ENCODE measurements at regions of chr1 and their contacts with region 1.

Region 1: DNA sequence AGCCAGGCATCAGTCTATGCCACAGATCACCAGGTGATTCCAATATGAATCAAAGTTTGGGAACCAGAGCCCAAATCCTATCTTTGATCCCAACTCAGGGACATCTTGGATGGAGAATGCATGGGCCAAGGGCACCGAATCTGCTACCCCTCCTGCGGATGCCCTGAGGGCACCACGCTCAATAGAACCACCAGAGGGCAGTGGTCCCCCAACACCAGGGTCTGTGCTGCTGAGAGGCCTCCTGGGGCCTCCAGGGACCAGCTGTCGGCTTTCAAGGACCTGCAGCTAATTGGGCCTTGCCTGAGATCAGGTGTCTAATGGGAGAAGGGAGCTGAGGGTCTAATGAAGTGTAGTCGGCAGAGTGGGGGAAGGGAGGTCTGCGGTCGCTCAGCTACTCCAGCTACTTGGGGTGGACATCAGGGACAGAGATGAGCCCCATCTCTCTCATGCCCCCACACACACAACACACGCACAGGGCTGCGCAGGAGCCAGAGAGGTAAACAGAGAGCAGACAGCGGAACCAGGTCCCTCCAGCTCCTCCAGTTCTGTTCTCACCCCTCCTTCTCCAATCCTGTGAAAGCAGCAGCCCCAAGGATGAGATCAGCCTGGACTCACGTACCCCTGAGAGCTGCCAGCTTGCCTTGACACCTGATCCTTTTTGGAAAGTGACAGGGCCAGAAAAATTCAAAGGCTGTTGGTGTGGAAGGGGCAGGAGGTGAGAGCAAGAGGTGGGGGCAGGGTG is 34.9 kb upstream of the PPP1R15B start:
- DNase-seq: no peak
- ATAC-seq: peak; percentile 68

Region 2: DNA sequence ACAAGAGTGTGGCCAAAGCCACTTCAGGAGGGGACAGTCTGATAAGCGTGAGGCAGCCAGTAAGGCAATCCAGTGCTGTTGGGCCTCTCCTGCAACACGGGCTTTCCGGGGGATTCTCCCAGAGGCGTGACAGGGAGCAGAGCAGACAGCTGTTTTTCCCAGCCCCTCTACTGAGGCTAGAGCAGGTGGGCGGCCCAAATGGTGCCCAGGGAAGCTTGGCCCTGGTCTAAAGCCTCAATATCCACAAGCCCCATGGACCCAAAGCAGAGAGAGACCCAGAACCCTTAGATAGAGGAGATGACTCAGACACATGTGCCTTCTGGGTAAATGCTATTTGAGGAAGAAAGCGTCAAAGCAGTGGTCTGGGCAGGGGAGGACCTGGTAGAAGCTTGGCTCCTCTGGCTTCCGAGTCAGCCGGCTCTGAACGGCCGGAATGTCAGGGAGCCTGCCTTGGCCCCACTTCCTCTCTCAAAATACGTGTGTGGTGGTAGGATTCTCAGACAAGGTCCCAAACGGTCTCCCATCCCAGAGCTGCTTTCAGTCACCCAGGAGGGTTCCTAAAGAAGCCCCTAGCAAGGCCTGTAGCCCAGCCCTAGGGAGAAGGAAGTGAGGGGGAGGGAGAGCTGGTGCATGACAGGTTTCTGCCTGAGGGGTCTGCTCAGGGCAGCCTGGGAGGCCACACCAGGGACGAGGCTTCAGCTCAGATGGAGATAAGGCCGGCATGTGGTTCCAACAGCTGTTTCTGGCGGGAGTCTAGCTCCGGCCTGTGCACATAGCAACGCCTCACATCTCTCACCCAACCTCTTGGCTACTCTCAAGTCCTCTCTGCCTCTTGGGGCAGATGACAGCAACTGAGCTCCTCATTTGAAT is 19.2 kb after region 1 on chr1:
- intact Hi-C with region 1: loop called (anchors 2 kb)
- DNase-seq: no peak
- ATAC-seq: peak; percentile 60

Region 3: GRCh38 chr1:204480515-204480914 is 34.0 kb after region 1 on chr1:
- intact Hi-C with region 1: no loop called
- DNase-seq: no peak
- ATAC-seq: no peak

Region 4: GRCh38 chr1:204494281-204495077 is 47.9 kb after region 1 on chr1 and contains the start of gene PIK3C2B:
- intact Hi-C with region 1: loop called (anchors 2 kb)
- DNase-seq: peak; percentile 91
- ATAC-seq: peak; percentile 97
- total RNA-seq, gene PIK3C2B: 22.7 TPM

Region 5: GRCh38 chr1:204506961-204507387 is 60.4 kb after region 1 on chr1:
- intact Hi-C with region 1: loop called (anchors 1 kb)
- DNase-seq: no peak
- ATAC-seq: peak; percentile 84